GM13976 (cell line): ENCODE measurements at regions of chr9 and their contacts with region 1.

Region 1: GRCh38 chr9:2889023-2889422 is 45.1 kb upstream of the PUM3 start:
- DNase-seq: no peak
- CTCF ChIP-seq: no peak

Region 2: GRCh38 chr9:1354086-1354485 is 1534.9 kb before region 1 on chr9:
- in situ Hi-C with region 1: no loop called
- DNase-seq: no peak
- CTCF ChIP-seq: no peak

Region 3: GRCh38 chr9:2934883-2935282 is 45.9 kb after region 1 on chr9:
- in situ Hi-C with region 1: loop called (anchors 10 kb)
- DNase-seq: no peak
- CTCF ChIP-seq: no peak

Region 4: DNA sequence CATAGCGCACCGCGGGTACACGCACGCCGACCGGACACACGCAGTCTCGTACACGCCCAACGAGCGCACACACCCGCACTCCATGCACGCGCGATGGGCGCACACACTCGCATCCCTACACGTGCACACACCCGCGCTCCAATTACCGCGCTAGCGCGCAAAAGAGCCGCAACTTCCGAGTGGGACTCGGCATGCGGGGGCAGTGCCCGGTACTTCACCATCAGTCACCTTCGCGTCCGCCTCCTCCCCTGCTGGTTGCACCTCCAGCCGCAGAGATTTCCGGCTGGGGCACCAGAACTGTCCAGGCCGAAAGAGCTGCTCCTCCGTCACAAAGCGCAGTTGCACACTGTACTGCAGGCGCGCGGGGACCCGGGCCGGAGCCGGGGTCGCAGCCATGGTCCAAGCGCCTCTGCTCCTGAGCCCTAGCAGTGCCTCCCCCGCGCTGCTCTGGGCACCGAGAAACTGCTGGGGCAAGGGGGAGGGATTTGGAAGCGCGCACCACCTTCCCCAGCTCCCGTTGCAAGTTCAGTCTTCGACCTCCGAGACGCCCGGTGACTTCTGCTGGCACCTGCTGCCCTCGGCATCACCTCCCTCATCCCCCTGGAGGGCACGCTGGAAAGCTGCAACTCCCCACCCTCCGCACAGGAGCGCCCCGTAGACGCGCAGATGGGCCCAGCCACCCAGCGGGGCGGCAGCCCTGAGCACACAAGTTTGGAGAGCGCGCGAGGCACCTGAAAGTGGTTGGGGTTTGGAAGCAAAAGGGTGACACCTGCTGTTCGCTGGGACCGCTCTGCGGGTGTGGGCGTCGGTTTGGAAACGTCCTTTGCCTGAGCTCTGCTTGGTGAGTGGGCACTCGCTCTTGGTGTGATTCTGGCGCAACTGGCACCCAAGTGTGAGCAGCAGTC is 292.3 kb after region 1 on chr9:
- in situ Hi-C with region 1: no loop called
- DNase-seq: peak; percentile 59
- CTCF ChIP-seq: peak; percentile 33